Calu3 (cell line): ENCODE measurements at regions of chr3 and their contacts with region 1.

Region 1: GRCh38 chr3:173584093-173584837 is 186.7 kb downstream of the NLGN1 start:
- DNase-seq: peak; percentile 66
- H3K4me3 Mint-ChIP-seq: peak overlapping the region; percentile 85
- H3K27ac Mint-ChIP-seq: peak overlapping the region; percentile 22
- H3K4me1 Mint-ChIP-seq: peaks cover 19% of the 10 kb centered on the region
- H3K27me3 Mint-ChIP-seq: no peaks in the 10 kb centered on the region
- CTCF ChIP-seq: peak; percentile 87

Region 2: DNA sequence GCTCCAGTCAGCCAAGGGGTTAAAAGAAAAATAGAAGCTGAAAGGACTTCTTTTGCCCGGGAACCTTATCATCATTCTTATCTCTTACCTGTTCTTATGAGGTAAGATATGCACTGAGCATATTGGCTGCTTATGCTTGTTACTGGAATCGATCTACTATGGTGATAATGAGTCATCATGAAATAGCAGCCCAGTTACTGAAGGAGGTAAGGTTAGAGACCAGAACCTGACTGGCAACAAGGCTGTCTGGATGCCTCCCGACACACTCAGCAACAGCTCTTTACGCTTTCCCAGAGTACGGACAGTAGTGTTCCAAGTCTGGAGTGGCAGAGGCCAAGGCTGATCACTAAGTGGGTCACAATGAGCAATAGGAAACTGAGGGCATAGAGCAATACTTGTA is 127.3 kb after region 1 on chr3:
- CTCF ChIA-PET with region 1: interaction called, 4 read pairs
- intact Hi-C with region 1: loop called (anchors 5 kb)
- DNase-seq: peak; percentile 71
- H3K4me3 Mint-ChIP-seq: peak overlapping the region; percentile 62
- H3K27ac Mint-ChIP-seq: peak overlapping the region; percentile 94
- H3K4me1 Mint-ChIP-seq: peaks cover 31% of the 10 kb centered on the region
- H3K27me3 Mint-ChIP-seq: no peaks in the 10 kb centered on the region
- CTCF ChIP-seq: no peak

Region 3: DNA sequence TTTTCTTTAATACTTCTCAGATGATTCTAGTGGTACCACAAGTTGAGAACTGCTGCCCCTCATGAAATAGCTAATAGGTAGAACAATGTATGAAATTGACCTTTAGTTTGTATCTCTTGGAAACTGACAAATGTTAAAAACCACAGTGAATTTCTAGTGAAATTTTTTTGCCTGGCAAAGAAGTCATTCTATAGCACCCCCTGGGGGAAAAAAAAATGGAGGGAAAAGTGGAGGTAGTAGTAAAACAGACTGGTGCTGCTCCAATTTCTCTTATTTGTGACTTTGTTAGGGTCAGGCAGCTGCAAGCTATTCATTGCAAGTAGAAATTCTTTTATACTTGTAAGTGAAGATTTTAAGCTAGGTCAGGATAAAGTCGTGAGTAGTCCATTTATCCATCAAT is 418.3 kb after region 1 on chr3:
- CTCF ChIA-PET with region 1: no interaction called
- intact Hi-C with region 1: loop called (anchors 1 kb)
- DNase-seq: peak; percentile 55
- H3K4me3 Mint-ChIP-seq: no peak overlapping the region
- H3K27ac Mint-ChIP-seq: no peak overlapping the region
- H3K4me1 Mint-ChIP-seq: no peaks in the 10 kb centered on the region
- H3K27me3 Mint-ChIP-seq: no peaks in the 10 kb centered on the region
- CTCF ChIP-seq: peak; percentile 61

Region 4: GRCh38 chr3:174325834-174326700 is 741.8 kb after region 1 on chr3:
- CTCF ChIA-PET with region 1: interaction called, 21 read pairs
- intact Hi-C with region 1: no loop called
- DNase-seq: no peak
- H3K4me3 Mint-ChIP-seq: no peak overlapping the region
- H3K27ac Mint-ChIP-seq: no peak overlapping the region
- H3K4me1 Mint-ChIP-seq: no peaks in the 10 kb centered on the region
- H3K27me3 Mint-ChIP-seq: no peaks in the 10 kb centered on the region
- CTCF ChIP-seq: no peak